A549 (cell line): ENCODE measurements at regions of chr6 and their contacts with region 1.

Region 1: GRCh38 chr6:71349976-71350615 is 61.5 kb downstream of the OGFRL1 start:
- DNase-seq: no peak
- ATAC-seq: no peak
- H3K4me3 ChIP-seq: no peak overlapping the region
- H3K27ac ChIP-seq: no peak overlapping the region
- H3K4me1 ChIP-seq: no peaks in the 10 kb centered on the region
- CTCF ChIP-seq: no peak
- EP300 ChIP-seq: no peak
- POLR2A ChIP-seq: no peak
- RAD21 ChIP-seq: no peak

Region 2: DNA sequence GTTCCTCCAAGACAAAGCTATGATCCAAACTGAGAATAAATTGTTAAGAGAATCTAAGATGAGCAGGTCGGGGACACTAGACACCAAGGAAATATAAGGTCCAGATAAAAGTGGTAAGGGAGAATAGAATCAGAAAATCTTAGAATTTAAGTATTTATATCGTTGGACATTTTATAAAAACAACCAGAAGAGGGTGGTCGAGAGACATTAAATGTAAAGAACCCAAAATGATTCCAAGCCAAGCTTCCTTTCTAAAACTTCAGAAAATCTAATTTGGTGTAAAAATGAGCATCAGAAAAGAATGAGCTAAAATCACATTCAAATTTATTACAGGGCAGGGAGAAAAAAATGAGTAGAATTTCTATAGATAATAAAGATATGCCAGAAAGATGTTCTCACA is 159.3 kb before region 1 on chr6:
- CTCF ChIA-PET with region 1: interaction called, 21 read pairs
- POLR2A ChIA-PET with region 1: no interaction called
- DNase-seq: peak in 1 of 2 experiments; percentile 19
- ATAC-seq: no peak
- H3K4me3 ChIP-seq: no peak overlapping the region
- H3K27ac ChIP-seq: no peak overlapping the region
- H3K4me1 ChIP-seq: peaks cover 11% of the 10 kb centered on the region; the same call in 2 of the 3 replicates
- CTCF ChIP-seq: peak; percentile 59
- EP300 ChIP-seq: no peak
- POLR2A ChIP-seq: no peak
- RAD21 ChIP-seq: peak; percentile 65 to 80